GM18951 (cell line): ENCODE measurements at regions of chr12 and their contacts with region 1.

Region 1: DNA sequence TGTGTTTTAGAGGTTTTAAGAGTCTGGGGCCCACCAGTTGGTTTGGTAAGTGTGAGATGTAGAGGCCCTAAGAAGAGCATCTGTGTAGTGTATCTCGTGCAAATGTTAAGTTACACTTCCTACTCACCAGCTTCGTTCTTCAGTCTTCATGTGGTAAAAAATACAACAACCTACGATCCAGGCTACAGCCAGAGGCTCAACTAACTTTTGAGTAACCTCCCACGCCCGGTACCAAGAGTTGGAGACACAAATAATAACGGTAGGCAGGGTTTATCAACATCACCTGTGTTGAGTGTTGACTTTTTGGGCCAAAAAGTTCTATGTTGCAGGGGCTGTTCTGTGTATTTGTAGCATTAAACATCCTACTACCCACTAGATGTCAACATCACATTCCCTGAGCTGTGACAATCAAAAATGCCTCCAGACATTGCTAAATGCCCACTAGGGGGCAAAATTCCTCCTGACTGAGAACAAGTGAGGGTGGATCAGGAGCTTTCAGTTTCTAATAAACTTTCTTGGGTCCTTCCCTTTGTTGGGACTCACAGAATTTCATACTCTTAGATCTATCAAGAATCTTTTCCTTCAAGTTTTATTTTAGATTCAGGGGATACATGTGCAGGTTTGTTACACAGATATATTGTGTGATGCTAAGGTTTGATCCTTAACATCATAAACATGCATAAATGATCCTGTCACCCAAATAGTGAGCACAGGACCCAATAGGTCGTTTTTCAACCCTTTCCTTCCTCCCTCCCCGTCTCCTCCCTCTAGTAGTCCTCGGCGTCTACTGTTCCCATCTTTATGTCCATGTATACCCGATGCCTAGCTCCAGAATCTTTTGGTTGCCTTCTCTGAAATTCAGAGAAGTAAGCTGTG is 94.7 kb downstream of the SLC2A13 start:
- POLR2A ChIP-seq: no peak

Region 2: DNA sequence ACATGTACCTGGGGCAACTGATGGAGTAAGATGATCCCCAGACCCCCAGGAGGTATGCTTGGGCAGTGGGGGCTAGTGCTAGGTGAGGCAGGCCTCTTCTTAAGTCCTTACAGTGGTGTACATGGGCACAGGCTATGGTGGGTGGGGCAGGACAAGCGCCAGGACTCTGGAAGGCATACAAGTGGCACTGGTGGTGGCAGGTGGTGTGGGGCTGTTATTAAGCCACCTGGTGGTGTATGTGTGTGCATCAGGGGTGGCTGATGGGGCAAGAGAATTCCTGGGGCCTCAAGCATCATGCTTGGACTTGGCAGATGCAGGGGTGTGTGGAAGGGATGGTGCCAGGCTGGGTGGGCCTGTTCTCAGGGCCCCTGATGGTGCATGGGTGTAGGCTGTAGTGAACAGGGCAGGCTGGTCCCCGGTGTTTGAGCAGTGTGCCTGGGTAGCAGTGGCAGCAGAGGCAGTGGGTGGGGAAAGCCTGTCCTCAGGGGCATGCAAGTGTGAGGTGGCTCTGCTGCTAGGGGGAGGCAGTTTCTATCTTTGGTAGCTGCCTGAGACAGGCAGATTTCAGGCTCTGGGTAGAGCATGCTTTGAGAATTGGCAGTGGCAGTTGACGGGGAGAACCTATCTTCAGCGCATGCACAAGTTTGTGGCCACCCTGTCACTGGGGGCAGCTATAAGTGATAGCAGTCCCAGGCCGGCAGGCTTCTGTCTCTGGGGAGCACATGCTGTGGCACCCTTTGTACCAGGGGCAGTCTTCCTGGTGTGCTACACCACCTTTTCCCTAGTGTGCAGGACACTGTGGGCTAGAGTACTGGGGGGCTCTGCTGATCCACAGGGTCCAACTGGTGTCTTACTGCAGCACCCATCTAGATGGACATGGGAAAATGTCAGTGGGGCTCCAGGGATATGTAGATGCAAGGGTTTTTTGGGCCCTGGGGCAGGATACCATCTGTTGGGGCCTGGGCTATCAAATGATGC is 338.9 kb before region 1 on chr12:
- in situ Hi-C with region 1: no loop called
- POLR2A ChIP-seq: no peak

Region 3: DNA sequence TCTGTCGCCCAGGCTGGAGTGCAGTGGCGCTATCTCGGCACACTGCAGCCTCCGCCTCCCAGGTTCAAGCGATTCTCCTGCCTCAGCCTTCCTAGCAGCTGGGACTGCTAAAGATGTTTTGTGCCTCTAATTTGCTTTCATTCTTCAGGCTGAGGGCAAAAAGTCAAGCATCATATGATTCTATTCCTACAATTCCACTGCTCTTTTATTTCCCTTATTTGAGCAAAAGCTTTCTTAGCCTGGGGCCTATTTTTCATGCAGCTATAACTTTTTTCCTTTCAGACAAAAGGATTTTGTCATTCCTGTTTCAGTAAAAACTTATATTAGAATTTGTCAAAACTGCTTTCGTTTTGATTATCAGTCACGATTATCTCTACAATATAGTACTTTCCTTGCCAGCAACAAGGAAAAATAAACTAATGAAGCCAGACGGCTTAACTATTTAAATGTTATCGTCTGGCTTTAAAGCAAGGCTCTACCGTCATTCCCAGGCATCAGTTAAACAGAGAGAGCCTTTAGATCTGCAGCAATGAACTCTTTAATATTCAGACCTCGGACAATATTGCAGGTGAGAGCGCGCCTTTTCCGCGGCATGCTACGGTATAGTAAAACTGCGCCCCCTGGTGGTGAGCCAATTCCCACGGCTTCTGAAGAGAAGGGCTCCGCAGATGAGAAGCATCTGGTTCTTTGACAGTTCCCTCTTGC is 96.1 kb after region 1 on chr12:
- in situ Hi-C with region 1: loop called (anchors 10 kb)
- POLR2A ChIP-seq: no peak

Region 4: GRCh38 chr12:40158592-40159111 is 147.5 kb after region 1 on chr12:
- in situ Hi-C with region 1: no loop called
- POLR2A ChIP-seq: no peak

Region 5: GRCh38 chr12:40312982-40313576 is 301.9 kb after region 1 on chr12:
- in situ Hi-C with region 1: loop called (anchors 25 kb)
- POLR2A ChIP-seq: no peak

Region 6: DNA sequence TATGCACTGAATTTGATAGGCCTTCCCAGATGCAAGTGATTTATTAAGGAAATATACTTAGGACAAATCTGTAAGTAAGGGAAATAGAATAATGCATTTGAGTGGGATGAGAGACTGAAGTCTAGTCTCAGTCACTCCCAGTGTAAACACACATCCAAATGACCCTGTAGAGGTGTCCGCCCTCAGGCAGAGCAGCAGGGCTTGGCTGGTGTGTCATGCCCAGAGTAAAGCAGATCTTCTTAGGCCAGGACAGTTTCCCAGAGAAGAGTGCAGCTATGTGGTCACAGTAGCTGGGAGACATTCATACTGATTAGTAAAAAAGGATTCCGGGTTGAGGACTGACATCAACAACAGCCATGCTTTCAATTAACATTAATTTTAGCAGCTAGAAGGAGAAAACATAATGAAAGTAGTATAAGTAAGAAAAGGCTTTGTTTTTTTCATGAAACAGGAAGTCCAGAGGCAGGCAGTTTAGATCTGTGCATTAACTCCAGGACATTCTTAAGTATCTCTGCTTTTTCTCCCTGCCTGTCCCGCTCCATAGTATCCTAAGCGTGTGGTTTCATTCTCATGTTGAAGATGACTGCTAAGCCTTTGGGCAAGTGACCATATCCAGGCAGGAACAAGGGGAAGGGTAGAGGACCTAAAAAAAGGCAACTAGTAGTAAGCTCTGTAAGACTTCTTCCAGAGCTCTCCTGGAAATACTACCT is 716.8 kb after region 1 on chr12:
- in situ Hi-C with region 1: no loop called
- POLR2A ChIP-seq: no peak